Activated CD8-positive, alpha-beta T cell treated with anti-CD3 and anti-CD28 coated beads, Interleukin-2, amount 10 ng/mL, durations not matched to agents 7 days and 5 days (primary cell): ENCODE measurements at regions of chr15 and their contacts with region 1.

Region 1: GRCh38 chr15:81265944-81266775 is 57.8 kb downstream of the STARD5 start:
- DNase-seq: peak; percentile 91
- ATAC-seq: peak; percentile 92
- H3K4me3 Mint-ChIP-seq: peak overlapping the region; percentile 49
- H3K27ac Mint-ChIP-seq: peak overlapping the region; percentile 63
- H3K4me1 Mint-ChIP-seq: peaks cover 56% of the 10 kb centered on the region
- H3K27me3 Mint-ChIP-seq: no peaks in the 10 kb centered on the region

Region 2: DNA sequence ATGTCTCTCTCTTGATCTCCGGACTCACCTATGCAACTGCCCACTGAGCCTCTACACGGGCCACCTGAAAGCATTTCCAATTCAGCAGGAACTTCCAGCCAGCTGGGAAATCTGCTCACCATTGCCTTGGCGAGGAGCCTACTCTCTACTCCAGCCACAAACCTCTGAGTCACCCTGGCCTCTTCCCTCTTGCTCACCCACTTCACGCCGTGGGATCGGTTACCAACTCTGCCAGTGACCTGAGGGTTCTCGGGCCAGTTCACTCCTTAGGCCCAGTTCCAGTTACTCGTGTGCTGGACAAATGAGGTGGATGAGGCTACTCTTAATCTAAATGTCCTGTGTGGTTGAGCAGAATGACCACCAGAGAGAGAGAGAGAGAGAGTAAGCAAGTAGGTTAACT is 416.9 kb before region 1 on chr15:
- CTCF ChIA-PET with region 1: no interaction called
- POLR2A ChIA-PET with region 1: no interaction called
- DNase-seq: no peak
- ATAC-seq: no peak
- H3K4me3 Mint-ChIP-seq: no peak overlapping the region
- H3K27ac Mint-ChIP-seq: no peak overlapping the region
- H3K4me1 Mint-ChIP-seq: peaks cover 2% of the 10 kb centered on the region
- H3K27me3 Mint-ChIP-seq: peaks cover 32% of the 10 kb centered on the region

Region 3: GRCh38 chr15:80970018-80970658 is 296.0 kb before region 1 on chr15:
- CTCF ChIA-PET with region 1: interaction called, 11 read pairs
- POLR2A ChIA-PET with region 1: no interaction called
- DNase-seq: peak; percentile 73
- ATAC-seq: no peak
- H3K4me3 Mint-ChIP-seq: no peak overlapping the region
- H3K27ac Mint-ChIP-seq: no peak overlapping the region
- H3K4me1 Mint-ChIP-seq: peaks cover 7% of the 10 kb centered on the region
- H3K27me3 Mint-ChIP-seq: no peaks in the 10 kb centered on the region

Region 4: GRCh38 chr15:81038975-81039607 is 227.1 kb before region 1 on chr15:
- CTCF ChIA-PET with region 1: interaction called, 10 read pairs
- POLR2A ChIA-PET with region 1: no interaction called
- DNase-seq: no peak
- ATAC-seq: no peak
- H3K4me3 Mint-ChIP-seq: no peak overlapping the region
- H3K27ac Mint-ChIP-seq: peak overlapping the region; percentile 84
- H3K4me1 Mint-ChIP-seq: peaks cover 13% of the 10 kb centered on the region
- H3K27me3 Mint-ChIP-seq: no peaks in the 10 kb centered on the region

Region 5: DNA sequence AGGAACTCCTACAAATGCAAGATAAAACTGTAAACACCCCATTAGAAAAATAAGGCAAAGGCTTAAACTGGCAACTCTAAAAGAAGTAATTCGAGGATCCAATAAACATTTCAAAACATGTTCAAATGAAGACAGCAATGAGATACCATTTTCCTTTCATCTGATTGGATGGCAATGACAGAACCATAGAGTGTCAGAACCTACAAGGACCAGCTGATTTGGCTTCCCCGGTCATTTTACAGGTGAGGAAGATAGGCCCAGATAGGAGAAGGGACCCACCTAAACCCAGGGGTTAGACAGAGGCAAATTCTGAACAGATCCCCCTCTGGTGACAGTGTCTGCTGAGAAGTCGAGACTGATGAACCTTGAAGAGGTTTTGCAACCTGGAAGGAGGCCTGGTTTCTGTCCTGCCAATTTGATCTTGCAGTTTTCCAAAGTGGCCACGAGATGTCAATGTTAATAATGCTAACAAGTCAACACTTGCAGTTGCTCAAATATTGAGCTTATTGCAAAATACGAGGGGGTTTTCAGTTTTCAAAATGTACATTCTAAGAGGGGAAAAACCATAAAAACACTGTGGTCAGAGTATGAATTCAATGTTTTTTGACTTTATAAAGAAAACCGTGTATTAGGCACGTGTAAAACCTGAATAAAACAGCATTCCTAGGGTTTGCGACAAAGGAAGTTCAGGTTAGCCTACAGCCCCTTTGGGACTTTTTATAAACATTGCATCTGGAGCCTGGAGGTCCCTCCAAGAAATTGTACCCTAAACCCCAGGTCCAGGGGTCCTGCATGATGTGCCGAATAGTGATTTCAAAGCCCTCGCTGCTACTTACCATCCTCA is 110.6 kb before region 1 on chr15:
- CTCF ChIA-PET with region 1: interaction called, 430 read pairs
- POLR2A ChIA-PET with region 1: interaction called, 4 read pairs
- DNase-seq: peak; percentile 44
- ATAC-seq: peak; percentile 44
- H3K4me3 Mint-ChIP-seq: no peak overlapping the region
- H3K27ac Mint-ChIP-seq: no peak overlapping the region
- H3K4me1 Mint-ChIP-seq: no peaks in the 10 kb centered on the region
- H3K27me3 Mint-ChIP-seq: peaks cover 5% of the 10 kb centered on the region

Region 6: GRCh38 chr15:81234819-81235218 is 31.3 kb before region 1 on chr15:
- CTCF ChIA-PET with region 1: interaction called, 23 read pairs
- POLR2A ChIA-PET with region 1: no interaction called
- DNase-seq: no peak
- ATAC-seq: no peak
- H3K4me3 Mint-ChIP-seq: no peak overlapping the region
- H3K27ac Mint-ChIP-seq: no peak overlapping the region
- H3K4me1 Mint-ChIP-seq: peaks cover 6% of the 10 kb centered on the region
- H3K27me3 Mint-ChIP-seq: no peaks in the 10 kb centered on the region

Region 7: GRCh38 chr15:81323944-81324881 is 58.1 kb after region 1 on chr15 and contains the start of gene STARD5:
- CTCF ChIA-PET with region 1: interaction called, 24 read pairs
- POLR2A ChIA-PET with region 1: no interaction called
- DNase-seq: peak; percentile 98
- ATAC-seq: peak; percentile 100
- H3K4me3 Mint-ChIP-seq: peak within 1 kb of the TSS; percentile 100
- H3K27ac Mint-ChIP-seq: peak within 1 kb of the TSS; percentile 94
- H3K4me1 Mint-ChIP-seq: peaks cover 39% of the 10 kb centered on the region
- H3K27me3 Mint-ChIP-seq: no peaks in the 10 kb centered on the region
- total RNA-seq, gene STARD5: 4.9 to 5.3 TPM

Region 8: DNA sequence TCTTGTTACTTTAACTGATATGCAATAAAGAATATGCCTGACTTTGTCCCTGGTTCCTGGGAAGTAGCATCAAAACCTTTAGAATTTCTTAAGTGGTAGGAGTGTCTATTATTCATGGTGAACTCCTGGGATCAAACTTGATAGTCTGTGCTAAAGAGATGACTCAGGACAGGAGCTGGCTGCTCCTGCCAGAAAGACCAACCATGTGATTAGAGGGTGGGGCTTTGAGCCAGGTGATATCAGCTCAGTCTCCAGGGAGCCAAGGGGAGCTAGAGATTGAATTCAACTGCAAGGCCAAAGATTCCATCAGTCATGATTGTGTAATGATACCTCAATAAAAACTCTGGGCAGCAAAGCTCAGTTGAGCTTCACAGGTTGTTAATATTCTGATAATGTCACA is 128.4 kb after region 1 on chr15:
- CTCF ChIA-PET with region 1: interaction called, 97 read pairs
- POLR2A ChIA-PET with region 1: no interaction called
- DNase-seq: no peak
- ATAC-seq: no peak
- H3K4me3 Mint-ChIP-seq: no peak overlapping the region
- H3K27ac Mint-ChIP-seq: no peak overlapping the region
- H3K4me1 Mint-ChIP-seq: no peaks in the 10 kb centered on the region
- H3K27me3 Mint-ChIP-seq: peaks cover 2% of the 10 kb centered on the region